Esophagus muscularis mucosa (tissue), 4 donors: ENCODE measurements at regions of chr19 and their contacts with region 1.

Region 1: DNA sequence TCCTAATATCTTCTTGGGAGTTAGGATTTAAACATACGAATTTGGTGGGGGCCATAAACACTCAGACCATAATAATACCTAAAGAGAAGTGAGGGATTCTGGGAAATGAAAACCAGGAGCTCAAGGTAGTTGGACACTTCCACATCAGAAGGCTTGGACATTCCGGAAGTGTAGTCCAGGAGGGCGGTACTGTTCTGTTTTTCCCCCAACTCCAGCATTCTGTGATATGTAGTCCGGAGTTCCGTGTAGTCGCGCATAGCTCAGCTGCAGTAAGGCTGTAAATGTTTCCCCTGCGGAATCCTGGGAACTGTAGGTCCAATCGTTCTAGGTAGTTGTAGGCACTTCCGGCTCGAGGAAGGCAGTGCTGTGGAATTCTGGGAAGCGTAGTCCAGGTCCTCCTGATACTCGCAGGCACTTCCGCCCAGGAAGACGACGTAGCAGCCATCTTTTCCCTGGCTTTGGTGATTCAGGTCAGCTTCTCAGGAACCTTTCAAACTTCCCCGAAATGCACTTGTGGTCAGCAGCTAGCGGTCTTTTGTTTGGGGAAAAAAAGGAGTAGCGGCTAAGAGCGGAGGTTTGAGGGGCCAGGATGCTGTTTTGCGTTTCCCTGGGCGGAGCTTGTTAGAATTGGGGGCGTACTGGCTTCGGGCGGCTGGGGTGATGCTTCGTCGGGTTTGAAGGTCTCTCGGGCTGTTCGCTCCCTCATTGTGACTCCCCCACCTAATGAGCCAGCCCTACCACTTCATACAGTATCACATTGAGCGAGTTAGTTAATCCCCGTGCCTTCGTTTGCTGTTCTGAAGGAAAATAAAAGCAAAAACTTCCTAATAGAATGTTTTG is at the start of gene ZNF226:
- DNase-seq: peak; percentile 95
- H3K4me3 ChIP-seq: peak within 1 kb of the TSS; percentile 67 to 82 (median 71)
- H3K27ac ChIP-seq: peak within 1 kb of the TSS; percentile 78 to 88 (median 87)
- H3K4me1 ChIP-seq: peaks cover 9 to 15% (median 13%) of the 10 kb centered on the region in 4 donors
- H3K27me3 ChIP-seq: no peaks in the 10 kb centered on the region
- CTCF ChIP-seq: no peak
- EP300 ChIP-seq: no peak
- POLR2A ChIP-seq: no peak
- total RNA-seq, gene ZNF226: 12.9 to 14.4 (median 13.2) TPM

Region 2: DNA sequence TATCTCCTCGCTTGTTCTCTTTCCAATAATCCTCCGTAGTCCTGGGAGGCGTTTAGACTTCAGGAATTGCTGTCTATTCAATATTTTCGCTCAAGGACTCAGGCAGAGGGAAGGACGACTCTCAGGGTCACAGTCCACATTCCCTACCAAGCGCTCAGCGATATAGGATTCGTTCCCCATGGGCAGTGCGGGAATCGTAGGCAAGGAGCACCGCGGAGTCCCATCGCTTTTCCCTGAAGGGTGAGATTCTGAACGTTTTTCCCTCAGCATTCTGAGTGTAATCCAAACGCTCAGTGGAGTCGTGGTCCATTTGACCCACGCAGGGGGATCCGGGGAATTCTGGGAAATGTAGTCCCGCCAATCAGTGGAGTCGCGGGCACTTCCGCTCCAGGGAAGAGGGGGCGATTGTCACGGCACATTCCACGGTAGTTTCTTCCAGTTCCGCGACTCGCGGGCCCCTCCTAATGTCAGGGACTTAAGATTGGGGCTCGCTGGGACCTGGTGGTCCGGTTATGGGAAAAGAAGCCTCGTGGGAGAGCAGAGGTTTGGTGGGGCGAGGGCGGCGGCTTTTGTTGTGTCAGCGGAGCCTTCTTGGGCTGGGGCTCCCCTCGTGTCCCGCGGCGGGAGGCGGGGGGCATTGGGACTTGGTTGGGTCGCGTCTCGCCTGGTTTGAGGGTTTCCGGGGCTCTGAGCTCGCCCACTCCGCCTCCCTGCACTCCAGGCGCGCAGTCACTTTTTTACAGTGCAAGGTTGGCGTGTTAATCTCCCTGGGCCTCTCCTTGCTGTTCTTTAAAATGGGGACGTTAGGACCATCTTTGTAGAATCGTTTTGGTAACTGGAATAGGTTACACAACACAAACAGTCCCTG is 23.5 kb before region 1 on chr19 and contains the start of gene ZNF234:
- intact Hi-C with region 1: loop called (anchors 2 kb)
- DNase-seq: peak; percentile 95
- H3K4me3 ChIP-seq: peak within 1 kb of the TSS; percentile 72 to 83 (median 77)
- H3K27ac ChIP-seq: peak within 1 kb of the TSS; percentile 76 to 83 (median 82)
- H3K4me1 ChIP-seq: peaks cover 9 to 23% (median 19%) of the 10 kb centered on the region in 4 donors
- H3K27me3 ChIP-seq: no peaks in the 10 kb centered on the region
- CTCF ChIP-seq: no peak
- EP300 ChIP-seq: no peak
- POLR2A ChIP-seq: no peak
- total RNA-seq, gene ZNF234: 5.4 to 7.0 (median 5.7) TPM

Region 3: GRCh38 chr19:44176590-44176989 is 11.7 kb after region 1 on chr19:
- intact Hi-C with region 1: no loop called
- DNase-seq: no peak
- H3K4me3 ChIP-seq: no peak overlapping the region
- H3K27ac ChIP-seq: no peak overlapping the region
- H3K4me1 ChIP-seq: no peaks in the 10 kb centered on the region
- H3K27me3 ChIP-seq: no peaks in the 10 kb centered on the region
- CTCF ChIP-seq: no peak
- EP300 ChIP-seq: no peak
- POLR2A ChIP-seq: no peak

Region 4: DNA sequence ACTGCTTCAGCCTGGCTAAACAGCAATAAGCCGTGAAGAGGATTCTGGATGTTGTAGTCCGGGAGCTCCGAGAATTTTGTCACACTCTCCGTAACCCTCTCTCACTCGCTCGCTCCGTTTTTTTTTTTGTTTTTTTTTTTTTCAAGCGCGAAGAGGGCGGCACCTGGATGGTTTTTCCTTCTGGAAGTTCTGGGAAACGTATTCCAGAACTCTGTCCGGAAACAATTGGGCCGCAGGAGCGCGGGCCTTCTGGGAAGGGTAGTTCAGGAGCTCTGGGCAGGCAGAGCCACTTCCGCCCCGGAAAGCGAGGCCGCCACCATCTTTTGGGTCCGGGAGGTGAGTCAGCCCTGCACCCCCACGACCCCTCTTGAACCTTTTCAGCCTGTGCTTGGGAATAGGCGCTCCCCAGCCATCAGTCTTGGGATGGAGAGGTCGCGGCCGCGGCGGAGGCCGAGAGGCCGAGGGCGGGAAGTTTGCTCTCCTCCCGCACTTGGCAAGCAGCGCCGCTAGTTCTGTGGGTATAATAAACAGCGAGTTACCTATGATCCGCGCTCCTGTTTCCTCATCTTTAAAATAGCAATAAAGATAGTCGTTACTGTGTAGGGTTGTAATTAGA is 47.5 kb after region 1 on chr19 and contains the start of gene ZNF227:
- intact Hi-C with region 1: loop called (anchors 5 kb)
- DNase-seq: peak; percentile 96
- H3K4me3 ChIP-seq: peak within 1 kb of the TSS; percentile 67 to 82 (median 74)
- H3K27ac ChIP-seq: peak within 1 kb of the TSS; percentile 85 to 88 (median 86)
- H3K4me1 ChIP-seq: peaks cover 14 to 27% (median 18%) of the 10 kb centered on the region in 4 donors
- H3K27me3 ChIP-seq: no peaks in the 10 kb centered on the region
- CTCF ChIP-seq: no peak
- EP300 ChIP-seq: peak; percentile 31
- POLR2A ChIP-seq: no peak
- total RNA-seq, gene ZNF227: 10.9 to 13.3 (median 12.4) TPM